Body of pancreas (tissue), 4 donors: ENCODE measurements at regions of chr6 and their contacts with region 1.

Region 1: DNA sequence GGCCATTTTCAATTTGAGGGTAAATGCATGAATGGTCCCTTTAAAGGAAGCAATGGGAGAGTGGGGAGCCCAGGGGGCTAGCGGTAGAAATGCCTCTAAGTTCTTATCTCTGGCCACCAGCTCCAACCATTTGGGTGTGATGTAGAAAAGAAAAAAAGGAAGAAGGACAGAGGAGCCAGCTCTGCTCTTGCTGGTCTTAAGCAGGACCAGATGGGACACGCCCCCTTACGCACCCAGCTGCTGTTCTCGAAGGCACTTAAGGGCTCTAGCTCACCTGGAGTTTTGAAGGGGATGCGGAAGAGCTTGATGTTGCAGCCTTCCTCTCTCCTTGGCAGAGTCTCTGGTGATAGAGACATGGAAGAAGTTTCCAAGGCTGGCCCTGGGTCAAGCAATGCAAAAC is 59.5 kb upstream of the RNF144B start:
- DNase-seq: peak in 2 of 4 donors; percentile 20 to 30
- ATAC-seq: no peak
- H3K4me3 ChIP-seq: no peak overlapping the region
- H3K27ac ChIP-seq: peak overlapping the region in 1 of 4 donors; percentile 42
- H3K4me1 ChIP-seq: peaks cover 8% of the 10 kb centered on the region
- H3K27me3 ChIP-seq: no peaks in the 10 kb centered on the region
- CTCF ChIP-seq: no peak
- POLR2A ChIP-seq: no peak

Region 2: DNA sequence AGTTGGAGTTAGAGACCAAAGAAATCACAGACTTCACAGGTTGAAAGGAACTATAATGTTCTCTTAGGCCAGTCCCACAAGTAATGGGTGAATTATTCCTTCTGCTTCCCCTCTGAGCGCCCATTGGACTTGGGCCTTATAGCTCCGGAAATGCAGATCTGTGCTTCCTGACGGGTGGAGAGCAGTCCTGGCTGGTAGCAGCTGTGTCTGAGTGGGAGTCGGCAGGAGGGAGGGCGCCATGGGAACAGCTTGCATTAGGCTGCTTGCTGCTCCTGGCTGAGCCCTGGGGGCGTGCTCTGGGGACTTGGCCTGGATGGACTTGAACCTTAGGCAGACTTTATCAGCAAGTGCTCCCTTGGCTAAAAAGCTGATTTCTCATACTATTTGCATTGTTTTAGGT is 602.5 kb before region 1 on chr6:
- intact Hi-C with region 1: no loop called
- DNase-seq: peak in 2 of 4 donors; percentile 12 to 17
- ATAC-seq: no peak
- H3K4me3 ChIP-seq: no peak overlapping the region
- H3K27ac ChIP-seq: no peak overlapping the region
- H3K4me1 ChIP-seq: no peaks in the 10 kb centered on the region
- H3K27me3 ChIP-seq: no peaks in the 10 kb centered on the region
- CTCF ChIP-seq: no peak
- POLR2A ChIP-seq: no peak

Region 3: GRCh38 chr6:18242062-18242851 is 85.4 kb before region 1 on chr6:
- intact Hi-C with region 1: no loop called
- DNase-seq: no peak
- ATAC-seq: no peak
- H3K4me3 ChIP-seq: no peak overlapping the region
- H3K27ac ChIP-seq: no peak overlapping the region
- H3K4me1 ChIP-seq: no peaks in the 10 kb centered on the region
- H3K27me3 ChIP-seq: no peaks in the 10 kb centered on the region
- CTCF ChIP-seq: no peak
- POLR2A ChIP-seq: no peak

Region 4: DNA sequence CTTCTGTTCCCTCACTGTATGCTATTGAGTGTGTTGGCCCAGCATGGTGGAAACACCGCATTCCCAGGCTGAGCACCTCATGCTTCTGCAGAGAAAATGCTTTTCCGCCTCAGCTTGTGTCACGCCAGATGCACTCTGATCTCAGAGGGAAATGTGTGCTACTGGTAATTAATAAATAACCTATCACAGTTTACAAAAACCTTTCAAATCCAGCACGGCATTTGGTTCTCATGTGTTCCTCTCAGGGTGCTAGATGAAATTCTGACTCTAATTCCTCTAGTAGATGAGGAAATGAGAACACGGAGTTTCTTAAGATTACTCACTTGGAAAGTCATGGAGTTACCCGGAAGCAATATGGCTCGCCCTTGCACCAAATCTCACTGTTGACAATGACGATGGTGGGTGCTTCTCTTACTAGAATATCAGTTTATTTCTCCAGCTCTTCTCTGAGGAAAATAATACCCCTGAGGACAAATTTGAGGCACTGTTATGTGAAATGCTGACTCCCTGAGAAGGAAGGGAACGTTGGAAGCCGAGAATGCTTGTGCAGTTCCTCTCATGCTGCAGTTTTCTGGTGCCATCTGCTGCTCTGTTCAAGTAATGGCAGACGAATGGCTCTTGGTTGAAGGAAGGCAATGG is 176.1 kb after region 1 on chr6:
- intact Hi-C with region 1: loop called (anchors 5 kb)
- DNase-seq: peak; percentile 68 to 78 (median 70)
- ATAC-seq: peak; percentile 93
- H3K4me3 ChIP-seq: no peak overlapping the region
- H3K27ac ChIP-seq: peak overlapping the region; percentile 40 to 82 (median 60)
- H3K4me1 ChIP-seq: peaks cover 6% of the 10 kb centered on the region
- H3K27me3 ChIP-seq: no peaks in the 10 kb centered on the region
- CTCF ChIP-seq: peak; percentile 72 to 98 (median 93)
- POLR2A ChIP-seq: peak in 1 of 3 donors; percentile 27